Mammary epithelial cell (primary cell): ENCODE measurements at regions of chr2 and their contacts with region 1.

Region 1: GRCh38 chr2:212520340-212520739 is 18.3 kb downstream of the ERBB4 start:
- DNase-seq: no peak
- H3K4me3 ChIP-seq: no peak overlapping the region
- H3K27ac ChIP-seq: no peak overlapping the region
- H3K4me1 ChIP-seq: no peaks in the 10 kb centered on the region
- H3K27me3 ChIP-seq: no peaks in the 10 kb centered on the region
- CTCF ChIP-seq: peak; percentile 16 to 61

Region 2: GRCh38 chr2:211745295-211746097 is 774.8 kb before region 1 on chr2:
- CTCF ChIA-PET with region 1: no interaction called
- dilution Hi-C with region 1: no loop called
- in situ Hi-C with region 1: loop called in 1 of 2 experiments (anchors 25 kb)
- intact Hi-C with region 1: loop called (anchors 1 kb)
- DNase-seq: peak; percentile 45
- H3K4me3 ChIP-seq: no peak overlapping the region
- H3K27ac ChIP-seq: no peak overlapping the region
- H3K4me1 ChIP-seq: no peaks in the 10 kb centered on the region
- H3K27me3 ChIP-seq: no peaks in the 10 kb centered on the region
- CTCF ChIP-seq: peak; percentile 89 to 96

Region 3: GRCh38 chr2:212147921-212148513 is 372.3 kb before region 1 on chr2:
- CTCF ChIA-PET with region 1: no interaction called
- dilution Hi-C with region 1: no loop called
- in situ Hi-C with region 1: no loop called
- intact Hi-C with region 1: loop called (anchors 2 kb)
- DNase-seq: no peak
- H3K4me3 ChIP-seq: no peak overlapping the region
- H3K27ac ChIP-seq: no peak overlapping the region
- H3K4me1 ChIP-seq: no peaks in the 10 kb centered on the region
- H3K27me3 ChIP-seq: no peaks in the 10 kb centered on the region
- CTCF ChIP-seq: peak; percentile 35 to 38

Region 4: GRCh38 chr2:212402315-212402714 is 118.0 kb before region 1 on chr2:
- CTCF ChIA-PET with region 1: no interaction called
- dilution Hi-C with region 1: no loop called
- in situ Hi-C with region 1: loop called in 1 of 2 experiments (anchors 10 kb)
- intact Hi-C with region 1: loop called (anchors 10 kb)
- DNase-seq: no peak
- H3K4me3 ChIP-seq: no peak overlapping the region
- H3K27ac ChIP-seq: no peak overlapping the region
- H3K4me1 ChIP-seq: no peaks in the 10 kb centered on the region
- H3K27me3 ChIP-seq: no peaks in the 10 kb centered on the region
- CTCF ChIP-seq: no peak